AG04449 (cell line): ENCODE measurements at regions of chr2 and their contacts with region 1.

Region 1: DNA sequence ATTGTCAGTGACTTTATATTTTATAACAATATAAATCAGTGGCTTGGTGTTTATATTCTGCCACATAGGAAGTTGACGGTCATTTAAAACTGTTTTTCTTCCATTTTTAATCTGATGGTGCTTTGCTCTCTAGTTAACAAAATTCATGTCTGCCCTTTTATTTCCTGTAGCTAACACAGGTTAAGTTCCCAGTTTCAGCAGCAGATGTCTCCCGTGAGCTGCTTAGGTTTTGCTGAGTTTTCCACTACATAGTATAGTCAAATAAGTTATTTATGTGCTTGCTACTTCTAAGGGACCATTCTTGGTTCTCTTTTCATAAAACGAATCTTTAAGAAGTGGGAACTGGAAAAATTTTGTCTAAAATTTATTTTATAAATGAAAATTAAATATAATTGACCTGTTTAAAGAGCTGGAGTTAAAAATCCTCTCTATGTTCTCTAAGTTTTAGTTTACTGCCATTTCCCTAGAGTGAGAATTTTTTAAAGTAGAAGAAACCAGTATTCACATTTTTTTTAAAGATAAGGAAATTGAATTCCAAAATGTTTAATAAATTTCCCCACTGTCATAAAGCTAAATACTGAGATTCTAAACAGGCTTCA is 20.6 kb downstream of the HTR2B start:
- DNase-seq: peak; percentile 26
- H3K4me3 ChIP-seq: no peak overlapping the region
- CTCF ChIP-seq: peak; percentile 66

Region 2: GRCh38 chr2:231124838-231125568 is 20.8 kb after region 1 on chr2 and contains the start of gene HTR2B:
- CTCF ChIA-PET with region 1: interaction called, 20 read pairs
- POLR2A ChIA-PET with region 1: interaction called, 3 read pairs
- DNase-seq: no peak
- H3K4me3 ChIP-seq: no peak within 1 kb of the TSS
- CTCF ChIP-seq: no peak

Region 3: GRCh38 chr2:231198291-231199173 is 94.3 kb after region 1 on chr2 and contains the start of gene ARMC9:
- CTCF ChIA-PET with region 1: interaction called, 336 read pairs
- POLR2A ChIA-PET with region 1: no interaction called
- DNase-seq: no peak
- H3K4me3 ChIP-seq: peak within 1 kb of the TSS; percentile 98
- CTCF ChIP-seq: no peak

Region 4: DNA sequence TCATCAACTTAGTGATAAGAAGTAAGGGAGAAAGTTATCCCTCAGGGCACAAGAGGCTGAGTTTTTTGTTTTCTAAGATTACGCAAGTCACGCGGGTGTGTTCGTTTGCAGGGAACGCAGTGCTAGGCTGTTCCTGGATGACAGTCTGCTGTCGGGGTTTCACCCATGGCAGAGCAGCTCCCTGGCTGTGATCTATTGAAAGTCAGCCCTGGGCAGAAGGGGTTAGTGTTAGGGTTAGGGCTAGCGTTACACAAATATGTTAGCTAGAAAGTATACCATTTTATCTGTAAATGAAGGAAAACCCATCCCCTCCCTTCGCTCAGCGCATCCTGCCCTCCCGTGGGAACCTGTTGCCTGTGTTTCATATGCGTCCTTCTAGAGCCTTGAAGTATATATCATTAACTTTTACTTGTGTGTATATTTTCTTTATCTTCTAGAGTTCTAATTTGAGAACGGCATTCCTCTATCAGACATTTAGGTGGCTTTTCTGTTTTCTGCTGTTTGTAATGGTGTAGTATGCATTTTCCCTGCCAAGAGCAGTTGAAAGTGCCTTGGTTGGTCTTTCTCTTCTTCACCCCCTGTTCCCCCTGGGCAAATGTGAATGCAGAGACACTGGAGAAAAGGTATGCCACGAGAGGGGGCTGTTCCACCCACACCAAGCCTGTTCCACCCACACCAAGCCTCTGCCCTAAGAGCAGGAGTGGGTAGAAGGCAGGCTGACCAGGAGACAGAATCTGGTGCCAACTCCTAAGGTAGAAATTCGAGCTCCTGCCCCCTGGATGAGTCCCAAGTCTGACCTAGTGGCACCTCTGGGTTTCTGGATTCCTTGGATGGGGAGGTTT is 141.3 kb after region 1 on chr2:
- CTCF ChIA-PET with region 1: interaction called, 15 read pairs
- POLR2A ChIA-PET with region 1: no interaction called
- DNase-seq: no peak
- H3K4me3 ChIP-seq: no peak overlapping the region
- CTCF ChIP-seq: no peak

Region 5: GRCh38 chr2:231452799-231453508 is 348.7 kb after region 1 on chr2:
- CTCF ChIA-PET with region 1: interaction called, 40 read pairs
- POLR2A ChIA-PET with region 1: no interaction called
- DNase-seq: no peak
- H3K4me3 ChIP-seq: no peak overlapping the region
- CTCF ChIP-seq: no peak